Activated CD4-positive, alpha-beta T cell treated with anti-CD3 and anti-CD28 coated beads, Interleukin-2, amount 10 ng/mL, durations not matched to agents 24 days and 14 days (primary cell): ENCODE measurements at regions of chr7 and their contacts with region 1.

Region 1: DNA sequence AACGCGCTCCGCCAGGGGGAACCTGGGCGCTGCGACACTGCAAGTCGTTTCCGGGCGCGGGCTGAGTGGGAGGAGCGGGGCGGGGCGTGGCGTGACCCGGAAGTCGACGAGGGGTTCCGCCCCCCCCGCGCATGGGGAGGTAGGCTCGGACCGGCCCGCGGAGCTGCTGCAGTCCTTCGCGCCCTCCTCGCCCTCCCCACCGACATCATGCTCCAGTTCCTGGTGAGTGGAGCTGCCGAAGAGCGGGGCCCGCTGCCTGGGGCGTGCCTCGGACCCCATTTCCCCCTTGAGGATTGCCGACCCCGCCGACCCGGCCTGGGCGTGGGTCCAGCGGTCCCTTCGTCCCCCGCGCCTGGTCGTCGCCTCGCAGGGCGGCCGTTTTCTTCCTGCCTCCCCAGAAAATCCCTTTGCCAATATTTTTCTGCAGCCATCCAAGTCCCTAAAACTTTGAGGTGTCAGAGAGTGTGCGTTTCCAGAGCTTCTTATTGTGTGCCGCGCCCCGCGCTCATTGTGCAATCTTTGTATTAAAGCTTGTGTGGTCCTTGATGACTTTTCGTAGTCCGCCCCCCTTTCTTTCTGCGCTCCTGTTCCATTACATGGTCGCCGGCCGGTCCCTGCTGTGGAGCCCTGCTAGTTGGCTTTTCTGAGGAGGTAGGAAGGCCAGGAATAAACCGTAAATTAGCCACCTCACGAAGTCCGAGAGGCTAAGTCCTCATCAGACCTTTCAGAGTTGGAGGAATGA is at the start of gene STMP1:
- DNase-seq: peak; percentile 99
- H3K4me3 Mint-ChIP-seq: peak within 1 kb of the TSS; percentile 94
- H3K27ac Mint-ChIP-seq: peak within 1 kb of the TSS; percentile 91
- H3K4me1 Mint-ChIP-seq: peaks cover 33% of the 10 kb centered on the region
- H3K27me3 Mint-ChIP-seq: no peaks in the 10 kb centered on the region
- total RNA-seq, gene STMP1: 23.5 and 25.8 TPM in 2 replicates

Region 2: GRCh38 chr7:135710417-135711138 is 48.0 kb after region 1 on chr7:
- intact Hi-C with region 1: loop called (anchors 5 kb)
- DNase-seq: peak; percentile 67
- H3K4me3 Mint-ChIP-seq: no peak overlapping the region
- H3K27ac Mint-ChIP-seq: no peak overlapping the region
- H3K4me1 Mint-ChIP-seq: no peaks in the 10 kb centered on the region
- H3K27me3 Mint-ChIP-seq: no peaks in the 10 kb centered on the region